Mammary epithelial cell (primary cell): ENCODE measurements at regions of chr18 and their contacts with region 1.

Region 1: DNA sequence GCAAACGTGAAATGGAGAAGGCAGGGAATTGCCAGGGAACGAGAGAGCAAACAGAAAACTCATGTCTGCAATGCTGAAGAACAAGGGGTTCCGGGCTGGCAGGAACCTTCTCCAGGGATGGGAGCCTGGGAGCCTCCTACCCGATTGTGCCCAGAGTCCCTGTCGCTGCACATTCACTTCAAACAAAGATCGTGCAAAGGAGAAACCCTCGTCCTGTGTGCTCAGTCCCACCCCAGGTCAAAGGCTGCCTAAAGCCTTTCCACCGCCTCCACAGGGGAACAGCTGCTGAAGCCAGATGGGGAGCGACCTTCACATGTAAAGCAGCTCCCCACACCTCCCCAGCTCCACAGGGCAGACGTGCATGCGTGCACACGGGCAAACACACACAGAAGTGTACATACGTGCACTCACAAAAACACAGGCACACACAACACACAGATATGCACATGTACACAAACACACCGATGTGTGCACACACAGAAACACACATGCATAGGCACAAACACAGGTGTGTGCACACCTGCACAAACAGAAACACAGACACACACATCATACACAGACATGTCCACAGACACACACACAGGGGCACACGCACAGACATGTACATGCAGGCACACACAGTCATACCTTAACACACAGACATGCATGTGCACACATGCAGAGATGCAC is 460.1 kb upstream of the SALL3 start:
- DNase-seq: no peak
- H3K4me3 ChIP-seq: no peak overlapping the region
- H3K27ac ChIP-seq: no peak overlapping the region
- H3K4me1 ChIP-seq: no peaks in the 10 kb centered on the region
- H3K27me3 ChIP-seq: no peaks in the 10 kb centered on the region
- CTCF ChIP-seq: no peak

Region 2: DNA sequence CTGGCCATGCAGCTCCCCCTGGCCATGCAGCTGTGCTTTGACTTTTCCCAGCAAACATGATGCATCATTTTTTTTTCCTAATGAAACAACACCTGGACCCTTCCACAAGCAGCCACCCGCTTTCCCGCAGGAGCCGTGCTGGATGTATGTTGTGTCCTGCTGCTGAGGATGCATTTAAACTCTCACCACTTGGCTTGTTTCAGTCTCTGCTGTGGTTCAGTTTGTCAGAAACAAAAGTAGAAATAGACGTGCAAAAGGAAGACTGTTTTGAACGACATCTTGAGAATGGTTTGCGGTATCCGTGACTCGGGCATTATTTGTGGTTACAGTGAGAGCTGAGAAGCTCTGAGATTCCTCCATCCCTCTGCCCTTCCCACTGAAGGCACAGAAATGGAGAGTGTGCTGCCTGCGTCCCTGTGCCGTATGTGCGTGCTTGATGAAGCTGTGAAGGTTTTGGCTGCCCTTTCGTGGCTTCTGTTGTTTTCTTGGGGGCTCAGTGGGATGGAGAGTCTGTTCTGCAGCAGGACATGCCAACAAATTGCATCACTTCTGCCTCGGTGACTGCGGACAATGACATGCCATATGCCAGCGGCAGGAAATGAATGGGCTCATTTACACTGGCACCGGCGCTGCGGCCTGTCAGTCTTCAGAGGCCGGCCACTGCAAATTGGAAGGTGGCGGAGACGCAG is 42.4 kb after region 1 on chr18:
- CTCF ChIA-PET with region 1: no interaction called
- dilution Hi-C with region 1: no loop called
- in situ Hi-C with region 1: no loop called
- intact Hi-C with region 1: no loop called
- DNase-seq: no peak
- H3K4me3 ChIP-seq: no peak overlapping the region
- H3K27ac ChIP-seq: no peak overlapping the region
- H3K4me1 ChIP-seq: no peaks in the 10 kb centered on the region
- H3K27me3 ChIP-seq: no peaks in the 10 kb centered on the region
- CTCF ChIP-seq: no peak

Region 3: DNA sequence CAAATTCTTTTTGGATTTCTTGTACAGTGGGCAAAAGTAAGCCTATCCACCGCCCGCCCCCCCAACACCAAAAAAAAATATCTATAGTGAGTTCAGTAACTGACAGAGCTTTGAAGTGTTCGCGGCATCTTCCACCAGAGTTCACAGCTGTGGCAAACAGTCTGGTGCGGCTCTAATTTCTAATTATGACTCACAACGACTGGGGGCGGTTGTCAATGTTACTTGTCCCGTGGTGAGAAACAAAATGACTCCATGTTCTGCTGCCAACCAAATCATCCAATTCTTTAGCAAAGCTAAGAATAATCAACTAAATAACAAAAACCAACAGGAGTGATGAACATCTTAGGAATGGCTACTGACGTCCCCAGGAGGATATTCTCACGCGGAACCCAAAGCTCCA is 67.6 kb after region 1 on chr18:
- CTCF ChIA-PET with region 1: no interaction called
- dilution Hi-C with region 1: loop called (anchors 5 kb)
- in situ Hi-C with region 1: no loop called
- intact Hi-C with region 1: no loop called
- DNase-seq: no peak
- H3K4me3 ChIP-seq: no peak overlapping the region
- H3K27ac ChIP-seq: no peak overlapping the region
- H3K4me1 ChIP-seq: no peaks in the 10 kb centered on the region
- H3K27me3 ChIP-seq: no peaks in the 10 kb centered on the region
- CTCF ChIP-seq: no peak